ENCODE measurements at regions of chr1 and their contacts with region 1.

Region 1: DNA sequence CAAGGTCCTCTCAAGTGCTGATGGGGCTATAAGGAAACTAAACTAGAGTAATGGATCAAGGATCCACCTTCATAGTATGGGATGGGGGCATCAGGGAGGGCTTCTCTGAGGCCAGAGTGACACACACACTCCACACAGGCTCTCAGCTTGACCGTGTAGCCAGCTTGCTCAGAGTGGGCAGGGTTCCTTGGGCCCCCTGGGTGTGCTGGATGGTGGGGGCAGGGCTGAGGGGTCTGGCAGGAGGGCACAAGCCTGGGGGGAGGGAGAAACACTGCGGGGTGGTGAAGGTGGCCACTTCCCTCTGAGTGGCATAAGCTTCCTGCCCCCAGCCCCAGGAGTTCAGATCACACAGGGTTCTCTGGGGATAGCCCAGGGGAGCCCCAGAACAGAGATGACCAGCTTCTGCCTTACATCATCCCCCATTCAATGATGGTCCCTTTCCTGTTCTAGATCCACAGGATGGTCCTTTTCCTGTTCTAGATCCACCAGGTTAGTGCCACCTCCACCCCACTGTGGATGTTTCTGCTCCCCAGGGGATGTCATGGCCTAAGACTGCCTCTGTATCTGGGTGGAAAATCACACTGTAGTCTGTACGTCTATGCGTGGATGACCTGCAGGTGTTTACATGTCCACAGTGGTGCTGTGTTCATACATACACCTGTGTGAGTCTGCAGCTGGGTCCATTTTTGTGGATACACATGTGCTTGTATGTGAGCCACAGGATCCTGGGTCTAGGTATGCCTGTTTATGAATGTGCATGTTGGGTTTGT is 525.0 kb downstream of the PTPRU start:
- DNase-seq: no peak
- H3K4me3 ChIP-seq: no peak overlapping the region
- H3K27ac ChIP-seq: no peak overlapping the region
- H3K4me1 ChIP-seq: no peaks in the 10 kb centered on the region
- H3K27me3 ChIP-seq: no peaks in the 10 kb centered on the region
- CTCF ChIP-seq: no peak

Region 2: DNA sequence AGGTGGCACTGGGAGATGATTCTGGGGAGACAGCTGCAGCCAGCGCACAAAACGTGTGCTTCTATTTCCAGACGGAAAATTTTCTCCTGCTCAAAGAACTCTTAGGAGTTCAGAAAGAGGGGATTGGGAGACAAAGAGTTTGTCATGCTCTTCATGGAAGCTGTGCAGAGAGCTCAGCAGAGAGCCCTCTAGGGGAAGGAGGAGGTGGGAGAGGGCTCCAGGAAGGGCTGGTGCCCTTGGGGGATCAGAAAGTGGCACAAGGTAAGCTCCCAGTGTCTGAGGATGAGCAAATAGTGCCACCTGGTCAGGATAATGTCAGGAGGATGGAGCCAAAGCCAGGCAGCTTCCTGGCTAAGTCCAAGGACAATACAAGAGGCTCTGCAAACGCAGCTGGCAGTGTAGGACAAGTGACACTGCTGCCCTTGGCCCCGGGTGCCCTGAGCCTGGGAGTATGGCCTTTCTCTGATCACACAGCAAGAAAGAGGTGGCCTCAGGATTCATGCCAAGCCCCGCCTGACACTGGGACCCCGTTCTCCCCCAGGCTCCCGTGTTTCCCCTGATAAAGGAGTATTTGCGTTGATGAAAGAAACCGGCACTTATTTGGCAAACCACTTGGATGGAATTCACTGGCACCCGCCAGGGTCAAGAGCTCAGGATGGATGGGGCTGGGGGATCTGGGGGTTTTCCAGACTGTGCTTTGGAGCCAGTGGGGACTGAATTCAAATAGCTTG is 271.0 kb before region 1 on chr1:
- CTCF ChIA-PET with region 1: no interaction called
- dilution Hi-C with region 1: no loop called
- in situ Hi-C with region 1: no loop called
- intact Hi-C with region 1: no loop called
- DNase-seq: no peak
- H3K4me3 ChIP-seq: no peak overlapping the region
- H3K27ac ChIP-seq: no peak overlapping the region
- H3K4me1 ChIP-seq: no peaks in the 10 kb centered on the region
- H3K27me3 ChIP-seq: no peaks in the 10 kb centered on the region
- CTCF ChIP-seq: peak in 1 of 2 donors; percentile 6

Region 3: GRCh38 chr1:29592731-29593130 is 168.6 kb before region 1 on chr1:
- CTCF ChIA-PET with region 1: no interaction called
- dilution Hi-C with region 1: no loop called
- in situ Hi-C with region 1: no loop called
- intact Hi-C with region 1: no loop called
- DNase-seq: no peak
- H3K4me3 ChIP-seq: no peak overlapping the region
- H3K27ac ChIP-seq: no peak overlapping the region
- H3K4me1 ChIP-seq: peaks cover 27% of the 10 kb centered on the region
- H3K27me3 ChIP-seq: no peaks in the 10 kb centered on the region
- CTCF ChIP-seq: no peak

Region 4: DNA sequence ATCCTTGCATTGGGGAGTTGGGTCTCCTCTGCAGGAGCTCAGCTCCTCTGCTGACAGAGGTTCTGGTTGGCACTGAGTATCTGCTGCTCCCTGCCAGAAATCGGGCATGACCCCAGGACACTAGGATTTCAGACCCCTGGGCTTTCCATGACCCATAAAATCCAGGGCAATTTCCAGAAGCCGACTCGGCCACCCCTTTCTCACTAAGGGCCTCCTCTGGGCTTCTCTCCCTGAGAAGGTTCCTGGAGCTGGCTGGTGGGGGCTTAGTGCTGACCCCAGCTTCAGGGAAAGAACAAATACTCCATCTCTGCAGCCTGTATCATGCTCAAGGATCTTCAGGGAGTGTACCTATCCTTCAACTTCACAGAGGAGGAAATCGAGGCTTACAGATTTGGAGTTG is 78.4 kb after region 1 on chr1:
- CTCF ChIA-PET with region 1: no interaction called
- dilution Hi-C with region 1: loop called (anchors 5 kb)
- in situ Hi-C with region 1: no loop called
- intact Hi-C with region 1: no loop called
- DNase-seq: no peak
- H3K4me3 ChIP-seq: no peak overlapping the region
- H3K27ac ChIP-seq: no peak overlapping the region
- H3K4me1 ChIP-seq: no peaks in the 10 kb centered on the region
- H3K27me3 ChIP-seq: peaks cover 4% of the 10 kb centered on the region
- CTCF ChIP-seq: no peak

Measured in mammary epithelial cell (primary cell).